CD4-positive, alpha-beta memory T cell (primary cell): ENCODE measurements at regions of chr11 and their contacts with region 1.

Region 1: GRCh38 chr11:12377824-12378593 is 638 bp downstream of the PARVA start:
- DNase-seq: peak in 4 of 5 donors; percentile 22 to 50 (median 32)
- H3K4me3 ChIP-seq: peak overlapping the region in 1 of 2 donors; percentile 49
- H3K4me3 Mint-ChIP-seq: peak overlapping the region; percentile 83 to 91 (median 87)
- H3K27ac ChIP-seq: no peak overlapping the region
- H3K27ac Mint-ChIP-seq: peak overlapping the region in 6 of 7 donors; percentile 38 to 84 (median 76)
- H3K4me1 ChIP-seq: peaks cover 5% of the 10 kb centered on the region
- H3K4me1 Mint-ChIP-seq: peaks cover 14 to 26% (median 19%) of the 10 kb centered on the region in 4 donors
- H3K27me3 ChIP-seq: no peaks in the 10 kb centered on the region
- H3K27me3 Mint-ChIP-seq: peaks cover 2 to 14% of the 10 kb centered on the region in 2 donors

Region 2: DNA sequence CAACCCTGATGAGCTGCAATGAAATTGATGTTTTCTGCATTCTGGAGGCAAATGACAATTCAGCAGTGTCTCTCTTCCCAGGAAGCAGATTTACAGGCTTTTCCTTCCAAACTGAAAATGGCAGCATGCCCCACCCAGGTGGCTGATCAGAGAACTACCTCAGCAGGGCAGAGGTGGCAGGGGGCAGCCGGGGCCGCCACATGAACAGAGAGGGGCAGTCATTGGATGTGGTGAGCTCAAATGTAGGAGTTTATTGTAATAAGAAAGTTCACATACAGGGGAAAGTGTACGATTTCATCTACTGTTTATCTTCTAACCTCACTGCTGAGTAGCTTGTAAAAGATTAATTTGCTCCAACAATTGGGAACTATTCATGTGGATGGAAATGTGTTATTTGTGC is 16.3 kb before region 1 on chr11:
- CTCF ChIA-PET with region 1: interaction called, 43 read pairs
- POLR2A ChIA-PET with region 1: interaction called, 40 read pairs
- intact Hi-C with region 1: loop called (anchors 1 kb)
- DNase-seq: no peak
- H3K4me3 ChIP-seq: no peak overlapping the region
- H3K4me3 Mint-ChIP-seq: peak overlapping the region in 2 of 8 donors; percentile 48 to 63
- H3K27ac ChIP-seq: no peak overlapping the region
- H3K27ac Mint-ChIP-seq: peak overlapping the region in 5 of 7 donors; percentile 9 to 79 (median 61)
- H3K4me1 ChIP-seq: peaks cover 68% of the 10 kb centered on the region
- H3K4me1 Mint-ChIP-seq: peaks cover 54 to 83% (median 64%) of the 10 kb centered on the region in 4 donors
- H3K27me3 ChIP-seq: no peaks in the 10 kb centered on the region
- H3K27me3 Mint-ChIP-seq: no peaks in the 10 kb centered on the region

Region 3: DNA sequence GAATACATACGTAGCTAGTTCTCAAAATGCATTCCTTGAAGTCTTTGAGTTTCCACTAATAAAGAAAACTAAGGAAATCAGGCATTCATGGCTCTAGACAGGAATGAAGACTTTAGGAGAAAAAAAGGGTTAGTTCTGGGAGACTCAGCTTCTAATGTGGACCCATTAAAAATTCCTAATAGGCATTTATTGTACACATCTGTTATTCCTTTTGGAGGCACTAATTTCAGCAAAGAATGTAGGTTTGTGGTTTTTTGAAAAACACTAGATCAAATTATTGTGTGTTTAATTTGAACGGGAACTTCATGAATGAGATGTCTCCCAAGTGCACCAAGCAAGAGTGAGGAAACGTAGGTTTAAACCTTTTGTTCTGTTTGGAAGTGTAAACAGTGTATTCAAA is 42.0 kb after region 1 on chr11:
- CTCF ChIA-PET with region 1: no interaction called
- POLR2A ChIA-PET with region 1: no interaction called
- intact Hi-C with region 1: no loop called
- DNase-seq: no peak
- H3K4me3 ChIP-seq: no peak overlapping the region
- H3K4me3 Mint-ChIP-seq: no peak overlapping the region
- H3K27ac ChIP-seq: no peak overlapping the region
- H3K27ac Mint-ChIP-seq: no peak overlapping the region
- H3K4me1 ChIP-seq: no peaks in the 10 kb centered on the region
- H3K4me1 Mint-ChIP-seq: peaks cover 0 to 1% (median 0%) of the 10 kb centered on the region in 4 donors
- H3K27me3 ChIP-seq: no peaks in the 10 kb centered on the region
- H3K27me3 Mint-ChIP-seq: peaks cover 0 to 3% of the 10 kb centered on the region in 2 donors